Dorsolateral prefrontal cortex (tissue), 120 donors: ENCODE measurements at regions of chr14 and their contacts with region 1.

Region 1: GRCh38 chr14:37874429-37875191 is 279.2 kb downstream of the TTC6 start:
- DNase-seq: peak in 9 of 10 donors; percentile 45 to 81 (median 71)
- H3K4me3 ChIP-seq: no peak overlapping the region
- H3K27ac ChIP-seq: no peak overlapping the region
- H3K27me3 ChIP-seq: no peaks in the 10 kb centered on the region
- CTCF ChIP-seq: peak; percentile 50 to 89 (median 81)

Region 2: DNA sequence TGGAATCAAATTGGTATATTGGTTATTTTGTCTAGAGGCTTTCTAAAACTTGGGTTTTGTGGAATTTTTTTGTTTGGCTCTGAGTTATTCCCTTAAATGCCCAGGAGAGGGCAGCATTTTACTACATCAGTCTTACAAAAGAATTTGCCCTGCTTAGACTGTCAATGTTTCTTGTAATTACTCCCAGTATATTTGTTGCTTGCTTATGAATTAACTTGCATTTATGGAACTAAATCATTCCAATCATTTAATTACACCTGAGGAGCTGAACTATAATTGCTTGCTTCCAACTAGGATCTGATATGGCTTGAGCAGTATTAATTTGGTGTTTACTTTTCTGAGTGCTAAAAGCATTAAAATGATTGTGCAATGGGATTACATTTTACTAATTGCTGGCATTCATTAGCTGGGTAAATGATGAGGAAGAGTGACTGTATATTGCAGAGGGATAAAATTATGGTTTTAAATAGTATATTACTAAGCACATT is 628.1 kb before region 1 on chr14:
- intact Hi-C with region 1: loop called (anchors 5 kb)
- DNase-seq: no peak
- H3K4me3 ChIP-seq: no peak overlapping the region
- H3K27ac ChIP-seq: no peak overlapping the region
- H3K27me3 ChIP-seq: no peaks in the 10 kb centered on the region
- CTCF ChIP-seq: peak; percentile 62 to 94 (median 83)

Region 3: GRCh38 chr14:37709419-37710195 is 165.0 kb before region 1 on chr14:
- intact Hi-C with region 1: loop called (anchors 5 to 10 kb)
- DNase-seq: no peak
- H3K4me3 ChIP-seq: no peak overlapping the region
- H3K27ac ChIP-seq: no peak overlapping the region
- H3K27me3 ChIP-seq: peaks cover 0 to 20% (median 0%) of the 10 kb centered on the region in 45 donors
- CTCF ChIP-seq: peak; percentile 18 to 72 (median 50)

Region 4: GRCh38 chr14:37796703-37797416 is 77.8 kb before region 1 on chr14:
- intact Hi-C with region 1: no loop called
- DNase-seq: no peak
- H3K4me3 ChIP-seq: no peak overlapping the region
- H3K27ac ChIP-seq: no peak overlapping the region
- H3K27me3 ChIP-seq: peaks cover 0 to 6% (median 0%) of the 10 kb centered on the region in 45 donors
- CTCF ChIP-seq: no peak